ENCODE measurements at regions of chr14 and their contacts with region 1.

Region 1: DNA sequence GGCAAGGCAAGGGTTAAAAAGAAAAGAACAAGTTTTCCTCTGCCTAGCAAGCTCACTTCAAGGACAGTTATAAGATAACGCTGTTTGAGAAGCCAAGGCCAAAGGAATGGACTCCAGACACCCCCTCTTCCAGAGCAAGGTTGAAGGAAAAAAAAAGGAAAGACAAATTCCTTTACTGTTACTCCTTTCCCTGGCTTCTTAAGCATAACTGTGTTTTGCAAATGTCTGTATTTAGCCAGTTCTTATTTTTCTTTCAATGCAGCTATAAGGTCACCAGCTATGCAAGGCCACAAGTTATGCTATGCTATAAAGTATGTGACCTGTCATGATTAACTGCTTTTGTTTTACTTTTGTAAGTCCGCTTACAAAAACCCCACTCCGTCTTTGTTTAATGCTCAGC is 26.6 kb downstream of the ZNF410 start:
- DNase-seq: no peak
- H3K4me3 ChIP-seq: no peak overlapping the region
- H3K27me3 ChIP-seq: no peaks in the 10 kb centered on the region
- CTCF ChIP-seq: no peak

Region 2: DNA sequence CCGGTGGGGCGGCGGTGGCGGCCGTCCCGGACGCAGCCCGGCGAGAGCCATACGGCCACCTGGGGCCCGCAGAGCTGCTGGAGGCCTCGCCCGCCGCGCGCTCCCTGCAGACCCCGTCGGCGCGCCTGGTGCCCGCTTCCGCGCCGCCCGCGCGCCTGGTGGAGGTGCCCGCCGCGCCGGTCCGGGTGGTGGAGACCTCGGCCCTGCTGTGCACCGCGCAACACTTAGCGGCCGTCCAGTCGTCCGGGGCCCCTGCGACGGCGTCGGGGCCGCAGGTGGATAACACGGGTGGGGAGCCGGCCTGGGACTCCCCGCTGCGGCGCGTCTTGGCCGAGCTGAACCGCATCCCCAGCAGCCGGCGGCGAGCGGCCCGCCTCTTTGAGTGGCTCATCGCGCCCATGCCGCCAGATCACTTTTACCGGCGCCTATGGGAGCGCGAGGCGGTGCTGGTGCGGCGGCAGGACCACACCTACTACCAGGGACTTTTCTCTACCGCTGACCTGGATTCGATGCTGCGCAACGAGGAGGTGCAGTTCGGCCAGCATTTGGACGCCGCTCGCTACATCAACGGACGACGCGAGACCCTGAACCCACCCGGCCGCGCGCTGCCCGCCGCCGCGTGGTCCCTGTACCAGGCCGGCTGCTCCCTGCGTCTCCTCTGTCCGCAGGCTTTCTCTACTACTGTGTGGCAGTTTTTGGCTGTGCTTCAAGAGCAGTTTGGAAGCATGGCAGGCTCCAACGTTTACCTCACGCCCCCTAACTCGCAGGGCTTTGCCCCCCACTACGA is 421.8 kb before region 1 on chr14:
- CTCF ChIA-PET with region 1: no interaction called
- POLR2A ChIA-PET with region 1: no interaction called
- DNase-seq: no peak
- H3K4me3 ChIP-seq: peak overlapping the region; percentile 76
- H3K27me3 ChIP-seq: no peaks in the 10 kb centered on the region
- CTCF ChIP-seq: no peak

Region 3: DNA sequence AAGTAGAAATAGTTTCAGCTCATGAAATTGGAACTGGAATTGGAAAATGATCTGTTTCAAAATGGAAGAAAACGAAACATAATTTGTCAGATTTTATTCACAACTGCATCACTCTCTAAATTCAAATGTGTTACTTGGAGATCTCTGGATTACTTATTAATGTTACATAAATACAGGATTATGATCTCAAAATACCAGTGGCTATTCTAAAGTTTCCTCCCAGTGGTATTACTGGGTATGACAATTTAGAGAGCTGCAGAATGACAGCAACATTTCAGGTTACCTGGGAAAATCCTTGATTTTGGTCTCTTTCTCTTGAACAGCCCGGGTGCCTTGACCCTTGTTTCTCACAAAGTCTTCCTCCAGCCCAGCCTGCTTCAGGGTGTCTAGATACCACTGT is 22.4 kb after region 1 on chr14:
- CTCF ChIA-PET with region 1: interaction called, 15 read pairs
- POLR2A ChIA-PET with region 1: no interaction called
- DNase-seq: no peak
- H3K4me3 ChIP-seq: no peak overlapping the region
- H3K27me3 ChIP-seq: no peaks in the 10 kb centered on the region
- CTCF ChIP-seq: peak; percentile 30; the same call in 1 of the 2 replicates